HEK293T (cell line): ENCODE measurements at regions of chr13 and their contacts with region 1.

Region 1: GRCh38 chr13:78131811-78132210 is 213.2 kb upstream of the EDNRB start:
- DNase-seq: no peak

Region 2: GRCh38 chr13:78121459-78122348 is 10.1 kb before region 1 on chr13:
- CTCF ChIA-PET with region 1: interaction called, 15 read pairs
- POLR2A ChIA-PET with region 1: no interaction called
- DNase-seq: peak; percentile 75

Region 3: DNA sequence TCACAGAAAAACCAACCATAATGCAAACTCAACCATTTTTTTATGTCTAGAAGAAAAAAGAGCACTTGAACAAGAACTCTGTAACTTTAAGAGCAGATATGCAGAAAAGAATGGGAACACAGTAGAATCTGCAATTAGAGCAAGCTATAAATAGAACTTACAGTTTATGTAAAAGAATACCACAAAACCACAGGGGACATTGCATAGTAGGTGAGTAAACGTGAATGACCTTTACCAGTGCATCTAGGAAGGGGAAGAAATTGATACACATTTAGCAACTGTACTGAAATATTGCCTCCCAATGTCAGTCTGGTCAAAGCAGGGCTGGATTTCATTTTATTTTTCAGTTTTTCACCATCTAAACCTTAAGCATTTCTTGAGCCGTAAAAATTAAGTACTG is 29.0 kb after region 1 on chr13:
- CTCF ChIA-PET with region 1: no interaction called
- POLR2A ChIA-PET with region 1: no interaction called
- DNase-seq: peak; percentile 32

Region 4: GRCh38 chr13:78476910-78477309 is 345.1 kb after region 1 on chr13:
- CTCF ChIA-PET with region 1: no interaction called
- POLR2A ChIA-PET with region 1: no interaction called
- DNase-seq: no peak

Region 5: GRCh38 chr13:79097201-79097600 is 965.4 kb after region 1 on chr13:
- CTCF ChIA-PET with region 1: no interaction called
- POLR2A ChIA-PET with region 1: no interaction called
- DNase-seq: no peak